CD8-positive, alpha-beta T cell (primary cell): ENCODE measurements at regions of chr11 and their contacts with region 1.

Region 1: DNA sequence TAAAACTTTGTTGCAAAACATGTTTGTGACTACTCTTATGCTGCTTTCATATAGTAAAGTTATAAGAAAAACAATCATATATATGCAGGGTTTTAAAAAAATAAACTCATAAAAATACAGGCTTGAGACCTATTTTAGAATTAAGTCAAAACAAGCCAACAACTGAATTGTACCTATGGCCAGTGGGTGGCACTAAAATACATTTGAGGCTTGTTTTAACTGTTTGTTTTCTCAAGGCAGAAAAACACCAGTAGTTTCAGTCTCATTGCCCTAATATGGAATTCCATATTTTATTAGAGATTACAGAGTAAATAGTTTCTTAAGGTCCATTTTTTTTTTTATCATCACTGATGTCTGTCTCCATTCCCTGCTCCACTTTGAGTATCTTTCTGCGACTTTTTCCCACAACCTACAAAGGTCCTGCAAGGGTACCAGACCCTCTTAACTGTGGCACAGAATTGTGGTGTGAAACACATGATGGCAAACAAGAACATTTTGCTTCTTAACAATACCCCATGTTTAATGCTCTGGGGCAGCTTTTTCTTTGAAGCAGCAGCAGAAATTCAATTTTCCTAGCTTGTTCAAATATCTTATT is 8.5 kb upstream of the CCDC89 start:
- DNase-seq: peak in 3 of 9 experiments; percentile 15 to 71 (median 59)
- ATAC-seq: peak; percentile 55
- H3K4me3 ChIP-seq: no peak overlapping the region
- H3K4me3 Mint-ChIP-seq: no peak overlapping the region
- H3K27ac ChIP-seq: no peak overlapping the region
- H3K27ac Mint-ChIP-seq: no peak overlapping the region
- H3K4me1 ChIP-seq: peaks cover 2% of the 10 kb centered on the region
- H3K4me1 Mint-ChIP-seq: peaks cover 7% of the 10 kb centered on the region
- H3K27me3 ChIP-seq: no peaks in the 10 kb centered on the region
- H3K27me3 Mint-ChIP-seq: no peaks in the 10 kb centered on the region
- CTCF ChIP-seq: peak; percentile 88

Region 2: DNA sequence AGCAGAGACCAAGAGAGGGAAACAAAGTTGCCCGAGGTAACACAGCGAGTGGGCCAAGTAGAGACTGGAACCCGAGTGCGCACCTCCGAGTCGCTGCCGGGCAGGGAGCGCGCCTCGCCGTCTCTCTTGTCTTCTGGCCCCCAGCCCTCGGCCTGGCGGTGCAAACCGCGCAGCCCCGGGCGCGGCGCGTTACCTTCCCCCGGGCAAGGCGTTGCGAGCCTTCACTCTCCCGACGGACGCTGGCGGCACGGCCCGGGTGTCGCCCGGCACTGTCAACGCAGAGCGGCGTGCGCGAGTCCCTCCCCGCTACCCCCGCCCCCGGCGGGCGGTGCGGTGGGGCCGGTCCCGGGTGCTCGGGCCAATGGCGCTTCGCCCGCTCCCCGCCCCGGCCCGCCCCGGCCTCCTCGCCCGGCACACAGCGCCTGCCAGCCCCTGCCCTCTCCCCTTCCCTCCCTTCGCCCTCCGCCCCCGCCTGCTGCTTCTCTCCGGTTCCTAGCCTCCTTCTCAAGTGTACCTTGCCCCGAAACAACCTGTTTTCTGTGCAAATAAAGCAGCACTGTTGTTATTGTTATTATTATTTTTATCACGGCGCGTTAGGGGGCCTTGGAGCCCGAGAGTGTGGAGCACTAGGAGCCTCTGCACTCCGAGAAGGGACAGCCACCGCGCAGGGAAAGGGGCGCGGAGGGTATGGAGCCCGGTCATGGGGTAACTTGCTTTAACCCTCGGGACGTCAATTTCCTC is 116.6 kb after region 1 on chr11 and contains the start of gene SYTL2:
- CTCF ChIA-PET with region 1: interaction called, 8 read pairs
- POLR2A ChIA-PET with region 1: interaction called, 5 read pairs
- intact Hi-C with region 1: loop called in 1 of 2 experiments (anchors 1 kb)
- DNase-seq: peak; percentile 53 to 89 (median 74)
- ATAC-seq: peak; percentile 78
- H3K4me3 ChIP-seq: peak within 1 kb of the TSS; percentile 68 to 85
- H3K4me3 Mint-ChIP-seq: peak within 1 kb of the TSS; percentile 93
- H3K27ac ChIP-seq: peak within 1 kb of the TSS; percentile 50 to 56
- H3K27ac Mint-ChIP-seq: peak within 1 kb of the TSS; percentile 93
- H3K4me1 ChIP-seq: peaks cover 19% of the 10 kb centered on the region
- H3K4me1 Mint-ChIP-seq: peaks cover 48% of the 10 kb centered on the region
- H3K27me3 ChIP-seq: no peaks in the 10 kb centered on the region
- H3K27me3 Mint-ChIP-seq: peaks cover 2% of the 10 kb centered on the region
- CTCF ChIP-seq: no peak
- total RNA-seq, gene SYTL2: 37.2 to 43.6 TPM

Region 3: DNA sequence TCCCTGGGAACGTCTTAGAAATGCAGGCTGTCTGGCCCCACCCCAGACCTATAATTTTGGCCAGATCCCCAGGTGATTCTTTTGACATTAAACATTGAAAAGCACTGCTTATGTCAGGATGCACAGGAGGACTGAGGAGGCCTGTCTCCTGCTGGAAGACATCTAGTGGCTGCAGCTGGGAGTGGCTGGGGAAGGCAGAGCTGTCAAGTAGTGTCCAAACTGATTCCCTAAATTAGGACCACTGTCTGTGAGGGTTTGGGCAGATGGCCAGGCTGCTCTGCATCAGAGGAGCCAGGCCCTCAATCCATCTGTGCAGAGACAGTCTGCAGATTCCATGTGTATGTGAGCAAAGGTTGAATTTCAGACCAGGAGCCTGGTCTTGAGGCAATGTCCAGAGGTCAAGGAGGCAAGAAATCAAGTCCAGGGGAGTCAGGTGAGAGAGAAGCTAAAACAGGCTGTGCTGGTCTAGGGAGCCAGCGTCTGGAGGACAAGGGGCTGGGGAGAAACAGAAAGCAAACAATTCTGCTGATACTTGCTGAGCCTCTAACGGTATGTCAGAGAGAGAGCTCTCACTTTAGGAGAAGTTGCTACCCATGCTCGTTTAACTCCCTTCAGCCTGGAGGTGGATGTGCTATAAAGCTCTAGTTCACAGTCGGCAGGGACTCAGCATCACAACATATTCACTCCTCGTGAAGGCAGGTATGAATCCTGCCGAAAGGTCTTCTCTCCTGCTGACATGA is 131.8 kb after region 1 on chr11:
- CTCF ChIA-PET with region 1: interaction called, 8 read pairs
- POLR2A ChIA-PET with region 1: interaction called, 3 read pairs
- intact Hi-C with region 1: loop called (anchors 2 kb)
- DNase-seq: peak in 4 of 9 experiments; percentile 17 to 46 (median 30)
- ATAC-seq: no peak
- H3K4me3 ChIP-seq: no peak overlapping the region
- H3K4me3 Mint-ChIP-seq: peak overlapping the region; percentile 12
- H3K27ac ChIP-seq: no peak overlapping the region
- H3K27ac Mint-ChIP-seq: peak overlapping the region; percentile 92
- H3K4me1 ChIP-seq: peaks cover 63% of the 10 kb centered on the region
- H3K4me1 Mint-ChIP-seq: peaks cover 66% of the 10 kb centered on the region
- H3K27me3 ChIP-seq: no peaks in the 10 kb centered on the region
- H3K27me3 Mint-ChIP-seq: no peaks in the 10 kb centered on the region
- CTCF ChIP-seq: peak; percentile 17

Region 4: DNA sequence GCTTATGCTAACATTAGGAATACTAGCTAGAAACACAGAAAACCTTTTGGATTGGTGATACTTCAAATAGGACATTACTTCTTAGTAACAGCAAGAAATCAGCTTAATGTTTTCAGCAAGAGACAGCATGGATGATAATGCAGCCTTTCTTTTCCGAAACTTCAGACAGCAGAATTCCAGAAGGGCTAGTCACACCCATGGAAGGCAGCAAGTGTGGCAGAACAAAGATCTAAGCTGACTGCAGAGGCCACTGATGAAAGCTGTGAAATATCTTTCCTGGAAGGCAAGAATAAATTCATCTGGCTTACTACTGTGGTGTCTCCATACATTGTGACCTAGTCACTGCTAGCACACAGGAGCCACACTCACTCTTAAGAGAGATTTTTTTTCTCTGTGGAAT is 261.0 kb after region 1 on chr11:
- CTCF ChIA-PET with region 1: no interaction called
- POLR2A ChIA-PET with region 1: no interaction called
- intact Hi-C with region 1: loop called in 1 of 2 experiments (anchors 10 kb)
- DNase-seq: no peak
- ATAC-seq: no peak
- H3K4me3 ChIP-seq: no peak overlapping the region
- H3K4me3 Mint-ChIP-seq: no peak overlapping the region
- H3K27ac ChIP-seq: no peak overlapping the region
- H3K27ac Mint-ChIP-seq: peak overlapping the region; percentile 23
- H3K4me1 ChIP-seq: no peaks in the 10 kb centered on the region
- H3K4me1 Mint-ChIP-seq: no peaks in the 10 kb centered on the region
- H3K27me3 ChIP-seq: no peaks in the 10 kb centered on the region
- H3K27me3 Mint-ChIP-seq: no peaks in the 10 kb centered on the region
- CTCF ChIP-seq: no peak

Region 5: DNA sequence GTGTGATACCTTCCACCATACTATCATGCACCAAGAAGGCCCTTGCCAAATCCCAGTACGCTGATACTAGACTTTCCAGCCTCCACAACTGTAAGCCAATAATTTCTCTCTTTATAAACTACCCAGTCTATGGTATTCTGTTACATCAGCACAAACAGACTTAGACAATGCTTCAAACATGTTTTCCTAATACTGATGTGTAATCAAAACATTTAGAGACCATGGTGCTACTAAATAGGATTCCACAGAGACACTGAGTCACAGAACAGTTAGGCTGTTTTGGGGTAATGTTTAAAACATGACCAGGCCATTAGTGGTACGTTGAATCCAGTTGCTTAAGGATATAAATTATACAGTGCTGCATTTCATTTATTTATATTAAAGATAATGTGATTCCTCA is 270.7 kb after region 1 on chr11:
- CTCF ChIA-PET with region 1: no interaction called
- POLR2A ChIA-PET with region 1: no interaction called
- intact Hi-C with region 1: loop called in 1 of 2 experiments (anchors 5 kb)
- DNase-seq: no peak
- ATAC-seq: no peak
- H3K4me3 ChIP-seq: no peak overlapping the region
- H3K4me3 Mint-ChIP-seq: no peak overlapping the region
- H3K27ac ChIP-seq: no peak overlapping the region
- H3K27ac Mint-ChIP-seq: peak overlapping the region; percentile 46
- H3K4me1 ChIP-seq: no peaks in the 10 kb centered on the region
- H3K4me1 Mint-ChIP-seq: peaks cover 13% of the 10 kb centered on the region
- H3K27me3 ChIP-seq: no peaks in the 10 kb centered on the region
- H3K27me3 Mint-ChIP-seq: no peaks in the 10 kb centered on the region
- CTCF ChIP-seq: no peak

Region 6: GRCh38 chr11:85988780-85989179 is 294.3 kb after region 1 on chr11:
- CTCF ChIA-PET with region 1: interaction called, 3 read pairs
- POLR2A ChIA-PET with region 1: no interaction called
- intact Hi-C with region 1: loop called in 1 of 2 experiments (anchors 10 kb)
- DNase-seq: no peak
- ATAC-seq: no peak
- H3K4me3 ChIP-seq: no peak overlapping the region
- H3K4me3 Mint-ChIP-seq: no peak overlapping the region
- H3K27ac ChIP-seq: no peak overlapping the region
- H3K27ac Mint-ChIP-seq: peak overlapping the region; percentile 41
- H3K4me1 ChIP-seq: no peaks in the 10 kb centered on the region
- H3K4me1 Mint-ChIP-seq: peaks cover 23% of the 10 kb centered on the region
- H3K27me3 ChIP-seq: no peaks in the 10 kb centered on the region
- H3K27me3 Mint-ChIP-seq: no peaks in the 10 kb centered on the region
- CTCF ChIP-seq: no peak